Posterior vena cava (tissue), 2 donors: ENCODE measurements at regions of chr14 and their contacts with region 1.

Region 1: DNA sequence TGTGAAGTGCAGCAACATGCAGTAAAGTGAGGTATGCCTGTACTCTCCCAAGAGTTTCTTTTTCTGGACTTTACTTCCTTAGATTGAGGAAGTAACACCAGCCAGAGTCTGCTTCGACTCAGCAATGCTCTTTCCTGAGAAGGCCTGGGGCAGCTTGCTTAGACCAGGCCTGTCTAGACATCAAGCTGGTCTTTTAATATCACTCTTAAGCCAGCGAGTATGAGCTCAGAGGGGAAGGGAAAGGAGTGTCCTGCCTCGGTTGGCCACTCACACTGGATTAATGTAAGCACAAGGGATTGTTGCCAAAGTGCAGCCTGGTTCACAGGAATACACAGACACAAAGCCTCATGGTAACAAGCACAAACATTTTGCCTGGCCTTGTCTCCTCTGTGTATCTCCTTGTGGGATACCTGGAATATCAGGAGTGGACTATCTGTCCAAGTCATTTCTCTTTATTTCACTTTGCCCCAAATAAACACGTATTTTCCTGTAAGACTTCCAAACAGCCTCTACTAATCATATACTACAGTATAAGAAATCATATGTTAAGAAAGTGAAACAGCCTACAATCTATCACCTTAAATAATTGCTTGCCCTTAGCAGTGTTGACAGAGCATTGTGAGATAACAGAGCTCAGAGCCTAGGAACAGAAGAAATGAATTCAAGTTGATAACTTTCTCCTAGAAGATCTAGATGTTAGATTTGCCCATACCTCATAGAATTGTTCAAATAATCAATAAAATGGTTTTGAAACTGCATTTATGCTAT is 121.2 kb upstream of the DAAM1 start:
- DNase-seq: no peak

Region 2: GRCh38 chr14:59020382-59020781 is 46.9 kb before region 1 on chr14:
- intact Hi-C with region 1: no loop called
- DNase-seq: no peak

Region 3: GRCh38 chr14:59097681-59098080 is 30.4 kb after region 1 on chr14:
- intact Hi-C with region 1: loop called in 1 of 2 experiments (anchors 1 kb)
- DNase-seq: no peak